GM18951 (cell line): ENCODE measurements at regions of chr2 and their contacts with region 1.

Region 1: GRCh38 chr2:136384531-136385303 is 266.8 kb upstream of the CXCR4 start:
- POLR2A ChIP-seq: no peak

Region 2: DNA sequence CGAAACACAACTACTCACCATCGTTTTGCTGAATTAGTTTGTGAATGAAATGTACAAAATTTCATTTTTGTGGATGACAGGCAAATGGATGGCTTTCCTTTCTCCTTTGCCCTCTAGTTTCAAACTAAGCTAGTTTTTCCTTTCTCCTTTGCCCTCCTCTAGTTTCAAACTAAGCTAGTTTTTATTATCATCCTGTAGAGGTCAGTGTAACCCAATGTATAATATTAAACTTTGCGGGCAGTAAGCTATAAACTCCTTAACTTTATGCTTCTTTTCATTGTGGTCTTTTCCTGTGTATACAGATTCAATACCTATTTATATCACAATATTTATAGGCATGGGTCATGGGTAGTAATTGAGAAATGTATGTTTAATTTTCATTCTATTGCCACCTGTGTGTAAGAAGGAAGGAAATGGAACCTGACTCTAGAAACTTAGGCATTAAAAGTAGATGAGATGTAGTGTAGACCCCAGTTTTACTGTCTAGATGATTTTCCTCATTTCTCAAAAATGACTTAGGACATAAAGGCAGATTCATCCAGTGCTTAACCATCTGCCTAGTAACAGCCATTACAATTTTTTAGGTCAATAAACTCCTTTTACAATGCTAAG is 1395.6 kb before region 1 on chr2:
- in situ Hi-C with region 1: loop called (anchors 25 kb)
- POLR2A ChIP-seq: no peak

Region 3: GRCh38 chr2:135913727-135914365 is 470.9 kb before region 1 on chr2:
- in situ Hi-C with region 1: loop called (anchors 5 kb)
- POLR2A ChIP-seq: no peak